ENCODE measurements at regions of chr2 and their contacts with region 1.

Region 1: DNA sequence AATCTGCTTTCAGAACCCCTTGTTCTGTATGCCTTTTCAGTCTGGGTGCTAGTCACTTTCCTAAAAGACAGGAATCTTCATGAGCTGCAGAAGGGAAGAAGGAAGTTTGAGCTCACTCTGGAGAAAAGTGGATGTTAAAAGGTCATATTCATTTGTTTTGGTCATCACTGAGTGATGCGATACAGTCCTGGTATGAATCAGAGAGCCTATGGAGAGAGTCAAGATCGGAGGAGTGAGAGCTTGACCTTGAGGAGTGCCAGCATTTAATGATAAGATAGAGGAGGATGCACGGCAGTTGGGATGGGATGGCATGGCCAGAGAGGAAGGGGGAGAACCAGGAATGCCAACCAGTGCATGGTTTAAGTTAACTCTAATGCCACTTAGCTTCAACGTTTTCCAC is 19.6 kb downstream of the USP39 start:
- DNase-seq: no peak
- CTCF ChIP-seq: no peak

Region 2: DNA sequence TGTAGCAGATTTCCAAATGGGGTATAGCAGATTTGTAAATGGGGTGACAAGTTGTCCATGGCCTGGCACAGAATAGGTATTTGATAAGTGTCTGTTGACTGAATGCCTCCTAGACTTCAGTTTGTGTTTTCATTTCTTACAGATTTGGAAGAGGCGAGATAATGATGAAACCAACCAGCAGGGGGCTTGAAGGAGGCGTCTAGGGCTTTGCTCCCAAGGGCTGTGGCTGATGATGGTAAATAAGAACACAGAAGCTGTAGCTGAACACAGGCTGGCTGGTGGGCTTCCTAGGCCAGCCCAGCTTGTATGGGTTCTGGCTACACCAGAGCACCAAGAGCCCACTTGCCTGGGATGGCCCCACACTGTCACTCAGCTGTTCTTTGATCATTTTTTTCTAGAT is 13.0 kb after region 1 on chr2:
- CTCF ChIA-PET with region 1: interaction called, 135 read pairs
- POLR2A ChIA-PET with region 1: no interaction called
- DNase-seq: no peak
- CTCF ChIP-seq: peak; percentile 46

Region 3: GRCh38 chr2:85655961-85656417 is 20.4 kb after region 1 on chr2:
- CTCF ChIA-PET with region 1: interaction called, 135 read pairs
- POLR2A ChIA-PET with region 1: no interaction called
- DNase-seq: no peak
- CTCF ChIP-seq: no peak

Region 4: GRCh38 chr2:85662899-85663593 is 27.4 kb after region 1 on chr2:
- CTCF ChIA-PET with region 1: interaction called, 47 read pairs
- POLR2A ChIA-PET with region 1: no interaction called
- DNase-seq: no peak
- CTCF ChIP-seq: no peak